Dendritic cell treated with granulocyte-macrophage colony-stimulating factor and Interleukin-4, amounts not matched to agents 40 ng/mL and 50 ng/mL, for 4 days (primary cell): ENCODE measurements at regions of chr22 and their contacts with region 1.

Region 1: GRCh38 chr22:19178656-19179496 is at the start of gene SLC25A1:
- H3K4me3 Mint-ChIP-seq: peak within 1 kb of the TSS; percentile 82
- H3K27ac Mint-ChIP-seq: peak within 1 kb of the TSS; percentile 64
- H3K4me1 Mint-ChIP-seq: peaks cover 45% of the 10 kb centered on the region
- H3K27me3 Mint-ChIP-seq: no peaks in the 10 kb centered on the region

Region 2: DNA sequence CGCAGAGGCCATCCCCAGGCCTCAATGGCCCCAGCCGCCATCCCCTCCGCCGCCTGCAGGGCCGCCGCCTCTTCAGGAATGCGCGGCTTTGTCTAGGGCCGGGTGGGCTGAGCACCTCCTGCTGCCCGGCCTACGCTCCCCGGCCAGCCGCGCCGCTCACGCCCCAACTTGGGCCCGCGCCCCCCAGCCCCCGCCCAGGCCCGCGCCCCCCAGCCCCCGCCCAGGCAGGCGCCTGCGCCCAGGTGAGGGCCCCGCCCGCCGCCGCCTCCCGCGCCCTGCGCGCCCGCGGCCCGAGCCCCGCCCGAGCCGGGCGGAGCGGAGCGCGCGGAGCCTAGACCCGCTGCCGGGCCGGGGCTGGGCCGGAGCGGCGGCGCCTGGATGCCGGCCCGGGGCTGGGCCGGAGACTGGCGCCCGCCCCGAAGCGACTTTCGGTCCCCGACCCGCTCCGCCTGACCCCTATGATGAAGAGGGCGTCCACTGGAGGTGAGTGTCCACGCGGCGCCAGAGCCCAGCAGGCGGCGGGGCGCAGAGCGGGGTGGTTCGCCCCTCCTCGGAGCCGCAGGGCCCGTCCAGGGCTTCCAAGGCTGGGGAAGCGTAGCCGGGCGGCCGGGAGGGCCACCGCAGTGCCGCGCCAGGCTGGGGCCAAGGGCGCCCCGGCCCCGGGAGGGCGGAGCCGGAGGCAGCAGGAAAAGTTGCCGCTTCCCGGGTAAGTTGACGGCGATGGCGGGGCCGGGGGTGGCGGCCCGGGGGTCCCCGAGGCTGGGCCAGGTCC is 208.5 kb before region 1 on chr22:
- intact Hi-C with region 1: no loop called
- H3K4me3 Mint-ChIP-seq: peak overlapping the region; percentile 2
- H3K27ac Mint-ChIP-seq: no peak overlapping the region
- H3K4me1 Mint-ChIP-seq: no peaks in the 10 kb centered on the region
- H3K27me3 Mint-ChIP-seq: peaks cover 52% of the 10 kb centered on the region

Region 3: DNA sequence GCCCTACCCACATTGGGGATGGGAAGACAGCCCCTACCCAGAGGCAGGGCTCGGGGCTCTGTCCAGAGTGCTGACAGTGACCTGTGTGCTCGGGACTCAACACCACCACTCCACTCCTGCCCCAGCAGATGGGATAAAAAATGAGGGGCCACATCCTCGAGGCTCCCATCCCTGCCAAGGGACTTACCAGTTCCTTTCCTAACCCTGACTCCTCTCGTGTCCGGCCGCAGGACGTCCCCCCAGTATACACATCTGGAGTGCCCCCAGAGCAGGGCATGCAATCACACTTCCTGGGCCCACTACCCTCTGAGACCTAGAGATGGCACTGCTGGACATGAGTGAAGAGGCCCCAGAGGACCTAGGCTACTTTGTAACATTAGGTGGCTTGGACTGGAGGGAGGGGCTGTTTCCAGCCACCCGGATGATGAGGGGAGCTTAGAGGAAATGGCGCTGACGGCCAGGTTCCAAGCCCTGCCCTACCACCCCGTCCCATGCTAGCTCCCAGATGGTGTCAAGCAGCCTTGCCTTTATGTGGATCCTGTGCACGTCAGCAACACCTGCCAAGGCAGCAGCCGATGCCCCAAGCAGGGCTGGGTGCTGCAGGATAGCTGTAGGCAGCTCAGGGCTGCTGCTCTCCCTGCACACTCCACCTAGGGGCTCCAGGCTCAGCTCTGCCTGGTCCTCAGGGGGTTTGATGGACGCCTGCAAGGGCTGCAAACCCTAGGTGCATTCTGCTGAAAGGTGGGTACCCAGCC is 143.2 kb before region 1 on chr22:
- intact Hi-C with region 1: no loop called
- H3K4me3 Mint-ChIP-seq: no peak overlapping the region
- H3K27ac Mint-ChIP-seq: no peak overlapping the region
- H3K4me1 Mint-ChIP-seq: no peaks in the 10 kb centered on the region
- H3K27me3 Mint-ChIP-seq: peaks cover 15% of the 10 kb centered on the region

Region 4: GRCh38 chr22:19122143-19122751 is 56.6 kb before region 1 on chr22 and contains the start of gene DGCR2:
- intact Hi-C with region 1: loop called (anchors 2 kb)
- H3K4me3 Mint-ChIP-seq: peak within 1 kb of the TSS; percentile 89
- H3K27ac Mint-ChIP-seq: peak within 1 kb of the TSS; percentile 85
- H3K4me1 Mint-ChIP-seq: peaks cover 53% of the 10 kb centered on the region
- H3K27me3 Mint-ChIP-seq: peaks cover 2% of the 10 kb centered on the region

Region 5: GRCh38 chr22:19143967-19144400 is 34.9 kb before region 1 on chr22:
- intact Hi-C with region 1: loop called (anchors 2 kb)
- H3K4me3 Mint-ChIP-seq: peak overlapping the region; percentile 100
- H3K27ac Mint-ChIP-seq: peak overlapping the region; percentile 94
- H3K4me1 Mint-ChIP-seq: peaks cover 14% of the 10 kb centered on the region
- H3K27me3 Mint-ChIP-seq: peaks cover 30% of the 10 kb centered on the region

Region 6: DNA sequence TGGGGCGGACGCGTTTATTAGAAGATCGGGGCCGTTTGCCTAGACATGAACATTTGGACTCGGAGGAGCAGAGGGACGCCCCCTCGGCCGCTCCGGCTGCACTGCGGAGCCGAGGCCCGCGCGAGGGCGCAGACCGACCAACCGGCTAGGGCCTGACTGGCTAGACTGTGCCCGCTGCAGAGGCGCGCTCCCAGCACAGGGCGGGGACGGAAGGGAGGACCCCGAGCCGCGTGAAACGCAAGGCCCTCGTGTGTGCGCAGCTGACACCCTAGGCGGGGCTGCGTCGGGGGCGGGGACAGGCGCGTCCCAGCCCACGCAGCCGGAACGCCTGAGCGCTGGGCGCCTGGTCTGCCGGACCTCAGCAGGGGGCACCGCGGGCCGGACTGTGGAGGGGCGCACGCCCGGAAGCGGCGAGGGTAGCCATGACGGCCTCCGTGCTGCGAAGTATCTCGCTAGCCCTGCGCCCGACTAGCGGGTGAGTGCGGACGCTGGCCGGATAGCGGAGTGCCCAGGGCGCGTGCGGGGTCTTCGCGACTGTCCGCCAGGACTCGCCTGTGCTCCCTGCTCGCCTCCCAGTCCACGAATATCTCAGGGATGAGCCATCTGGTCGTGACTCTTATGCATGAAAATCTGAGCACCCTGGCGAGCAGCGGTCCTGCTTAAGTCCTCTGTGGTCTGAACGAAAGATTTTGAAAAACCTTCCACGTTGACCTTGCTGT is 253.4 kb after region 1 on chr22 and contains the start of gene MRPL40:
- intact Hi-C with region 1: loop called (anchors 1 kb)
- H3K4me3 Mint-ChIP-seq: peak within 1 kb of the TSS; percentile 85
- H3K27ac Mint-ChIP-seq: peak within 1 kb of the TSS; percentile 97
- H3K4me1 Mint-ChIP-seq: peaks cover 52% of the 10 kb centered on the region
- H3K27me3 Mint-ChIP-seq: no peaks in the 10 kb centered on the region

Region 7: GRCh38 chr22:19479357-19480172 is 300.7 kb after region 1 on chr22 and contains the start of gene CDC45:
- intact Hi-C with region 1: loop called (anchors 2 kb)
- H3K4me3 Mint-ChIP-seq: peak within 1 kb of the TSS; percentile 88
- H3K27ac Mint-ChIP-seq: peak within 1 kb of the TSS; percentile 97
- H3K4me1 Mint-ChIP-seq: peaks cover 33% of the 10 kb centered on the region
- H3K27me3 Mint-ChIP-seq: no peaks in the 10 kb centered on the region